Activated B cell treated with CpG ODN at 0.5 μM for 24 hours (primary cell): ENCODE measurements at regions of chr3 and their contacts with region 1.

Region 1: DNA sequence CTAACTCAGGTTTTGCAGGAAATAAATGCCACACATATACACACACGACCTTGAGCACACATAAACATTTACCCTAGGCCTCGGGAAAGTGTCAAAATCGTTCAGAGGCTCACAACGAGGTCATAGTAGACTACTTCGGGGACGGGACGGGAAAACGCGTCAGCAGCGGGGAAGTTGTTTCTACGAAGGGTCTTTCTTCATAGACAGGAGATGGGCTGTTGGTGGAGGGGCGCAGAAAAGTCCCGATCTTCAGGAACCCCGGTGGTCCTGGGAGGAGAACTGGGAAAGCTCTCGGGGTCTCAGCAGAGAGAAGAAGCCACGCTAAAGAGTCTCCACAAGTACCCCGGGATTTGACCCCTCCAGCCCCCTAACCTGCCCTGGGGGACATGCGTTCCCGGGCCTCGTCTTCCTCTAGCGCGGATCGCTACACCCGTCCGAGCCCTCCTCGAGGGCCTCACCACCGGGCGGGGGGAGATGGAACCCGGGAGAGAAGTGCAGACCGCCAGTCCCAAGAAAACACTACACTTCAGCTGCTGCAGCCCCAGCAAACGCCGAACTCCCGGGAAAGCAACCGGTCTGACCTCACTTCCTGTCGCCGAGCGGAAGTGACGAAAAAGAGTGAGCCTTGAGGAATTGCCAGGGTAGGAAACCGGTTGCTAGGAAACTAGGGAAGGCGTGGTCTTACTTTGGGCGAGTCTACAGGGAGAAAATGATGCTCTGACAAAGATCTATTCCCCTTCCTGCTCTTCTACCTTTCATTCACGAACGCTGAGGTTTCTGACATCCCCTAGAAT is at the start of gene PIK3R4:
- DNase-seq: peak; percentile 82
- ATAC-seq: peak; percentile 80
- H3K4me3 Mint-ChIP-seq: peak within 1 kb of the TSS; percentile 87
- H3K27ac Mint-ChIP-seq: peak within 1 kb of the TSS; percentile 91
- H3K4me1 Mint-ChIP-seq: peaks cover 53% of the 10 kb centered on the region
- H3K27me3 Mint-ChIP-seq: no peaks in the 10 kb centered on the region
- CTCF ChIP-seq: no peak
- total RNA-seq, gene PIK3R4: 22.1 and 32.4 TPM in 2 replicates

Region 2: DNA sequence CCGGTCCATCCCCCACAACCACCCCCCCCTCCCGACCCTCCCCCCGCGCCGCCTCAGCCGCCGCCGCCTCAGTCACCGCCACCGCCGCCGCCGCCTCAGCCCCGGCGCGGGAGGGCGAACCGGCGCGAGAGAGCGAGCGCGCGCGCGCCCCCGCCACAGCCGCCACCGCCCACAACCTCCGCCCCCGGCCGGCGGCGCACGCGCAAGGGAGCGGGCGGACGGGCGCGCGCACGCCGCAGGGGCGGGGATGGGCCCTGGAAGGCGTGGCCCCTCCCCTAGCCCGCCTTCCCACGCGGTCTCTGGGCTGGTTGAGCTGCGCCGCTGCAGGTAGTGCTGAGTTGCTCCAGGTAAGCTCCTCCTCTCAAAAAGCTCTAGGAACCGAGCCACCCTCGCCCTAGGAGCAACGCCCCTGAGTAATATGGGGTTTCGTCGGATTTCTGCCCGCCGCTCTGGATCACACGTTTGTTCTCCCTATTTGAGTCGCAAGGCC is 852.8 kb before region 1 on chr3 and contains the start of gene TMCC1:
- CTCF ChIA-PET with region 1: no interaction called
- POLR2A ChIA-PET with region 1: no interaction called
- intact Hi-C with region 1: loop called (anchors 5 kb)
- DNase-seq: peak; percentile 92
- ATAC-seq: peak; percentile 90
- H3K4me3 Mint-ChIP-seq: peak within 1 kb of the TSS; percentile 87
- H3K27ac Mint-ChIP-seq: peak within 1 kb of the TSS; percentile 88
- H3K4me1 Mint-ChIP-seq: peaks cover 34% of the 10 kb centered on the region
- H3K27me3 Mint-ChIP-seq: no peaks in the 10 kb centered on the region
- CTCF ChIP-seq: no peak
- total RNA-seq, gene TMCC1: 25.8 and 25.9 TPM in 2 replicates

Region 3: DNA sequence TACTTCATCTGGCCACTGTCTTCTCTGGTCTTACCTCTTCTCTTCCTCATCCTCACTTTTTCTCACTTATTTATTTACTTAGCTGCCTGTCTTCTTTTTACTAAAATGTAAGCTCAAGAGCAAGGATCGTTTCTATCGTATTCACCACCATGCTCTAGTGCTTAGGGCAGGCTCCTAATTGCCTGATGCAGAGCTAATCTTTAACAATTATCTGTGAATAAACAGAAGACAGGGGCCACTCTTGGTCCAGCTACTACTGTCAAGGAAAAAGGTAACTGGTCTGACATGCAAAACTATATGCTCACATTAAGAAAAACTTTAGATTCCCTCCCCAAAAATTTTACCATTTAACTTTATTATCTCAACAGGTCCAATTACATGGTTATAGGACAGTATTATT is 17.3 kb before region 1 on chr3:
- CTCF ChIA-PET with region 1: no interaction called
- POLR2A ChIA-PET with region 1: interaction called, 3 read pairs
- intact Hi-C with region 1: loop called (anchors 2 kb)
- DNase-seq: no peak
- ATAC-seq: no peak
- H3K4me3 Mint-ChIP-seq: no peak overlapping the region
- H3K27ac Mint-ChIP-seq: no peak overlapping the region
- H3K4me1 Mint-ChIP-seq: peaks cover 4% of the 10 kb centered on the region
- H3K27me3 Mint-ChIP-seq: no peaks in the 10 kb centered on the region
- CTCF ChIP-seq: no peak

Region 4: DNA sequence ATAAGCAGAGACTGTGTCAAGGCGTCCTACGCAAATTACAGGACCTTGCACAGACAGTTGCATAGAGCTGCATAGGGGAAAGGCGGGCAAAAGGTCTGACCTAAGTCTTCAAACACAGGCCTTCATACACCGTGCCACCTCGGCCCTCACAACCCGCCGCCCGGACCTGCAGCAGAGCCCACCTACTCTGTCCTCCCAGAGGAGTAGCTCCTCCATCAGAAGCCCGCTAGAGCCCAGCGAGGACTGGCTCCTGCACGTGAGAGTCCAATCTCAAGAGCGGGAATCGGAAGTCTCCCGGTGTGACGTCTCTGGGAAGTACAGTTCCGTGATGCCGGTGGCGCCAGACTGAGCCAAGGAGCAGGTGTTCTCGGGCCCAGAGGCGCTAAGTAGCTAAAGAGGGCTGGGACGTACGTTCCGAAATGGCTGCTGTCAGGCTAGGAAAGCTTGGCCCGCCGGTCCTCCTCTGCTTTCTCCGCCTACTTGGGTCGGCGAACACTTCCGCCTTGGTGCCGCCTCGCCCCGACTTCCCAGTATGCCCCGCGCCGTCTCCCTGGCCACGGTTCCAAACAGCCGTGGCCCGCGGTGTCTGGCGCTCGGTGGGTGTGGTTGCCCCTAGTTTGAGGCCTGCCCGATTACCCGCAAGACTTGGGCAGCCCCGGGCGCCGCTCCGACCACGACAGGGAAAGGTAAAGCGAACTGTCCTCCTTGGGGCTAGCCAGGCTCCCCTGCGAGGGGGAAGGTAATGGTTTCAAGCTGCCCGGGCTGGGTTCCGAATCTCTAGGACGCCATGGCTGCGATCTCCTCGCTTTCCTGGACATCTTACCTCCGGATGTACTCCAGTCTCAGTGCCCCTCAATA is 280.1 kb after region 1 on chr3 and contains the starts of genes ASTE1 and NEK11:
- CTCF ChIA-PET with region 1: no interaction called
- POLR2A ChIA-PET with region 1: interaction called, 5 read pairs
- intact Hi-C with region 1: loop called (anchors 1 kb)
- DNase-seq: peak; percentile 89
- ATAC-seq: peak; percentile 97
- H3K4me3 Mint-ChIP-seq: peak within 1 kb of the TSS; percentile 96
- H3K27ac Mint-ChIP-seq: peak within 1 kb of the TSS; percentile 97
- H3K4me1 Mint-ChIP-seq: peaks cover 52% of the 10 kb centered on the region
- H3K27me3 Mint-ChIP-seq: no peaks in the 10 kb centered on the region
- CTCF ChIP-seq: no peak
- total RNA-seq, gene ASTE1: 15.6 and 16.9 TPM in 2 replicates
- total RNA-seq, gene NEK11: 1.5 and 1.9 TPM in 2 replicates

Region 5: GRCh38 chr3:131381444-131382291 is 635.2 kb after region 1 on chr3 and contains the start of gene NUDT16:
- CTCF ChIA-PET with region 1: no interaction called
- POLR2A ChIA-PET with region 1: interaction called, 3 read pairs
- intact Hi-C with region 1: loop called (anchors 2 kb)
- DNase-seq: peak; percentile 98
- ATAC-seq: peak; percentile 98
- H3K4me3 Mint-ChIP-seq: peak within 1 kb of the TSS; percentile 97
- H3K27ac Mint-ChIP-seq: peak within 1 kb of the TSS; percentile 92
- H3K4me1 Mint-ChIP-seq: peaks cover 24% of the 10 kb centered on the region
- H3K27me3 Mint-ChIP-seq: no peaks in the 10 kb centered on the region
- CTCF ChIP-seq: no peak
- total RNA-seq, gene NUDT16: 15.8 TPM in 2 replicates

Region 6: DNA sequence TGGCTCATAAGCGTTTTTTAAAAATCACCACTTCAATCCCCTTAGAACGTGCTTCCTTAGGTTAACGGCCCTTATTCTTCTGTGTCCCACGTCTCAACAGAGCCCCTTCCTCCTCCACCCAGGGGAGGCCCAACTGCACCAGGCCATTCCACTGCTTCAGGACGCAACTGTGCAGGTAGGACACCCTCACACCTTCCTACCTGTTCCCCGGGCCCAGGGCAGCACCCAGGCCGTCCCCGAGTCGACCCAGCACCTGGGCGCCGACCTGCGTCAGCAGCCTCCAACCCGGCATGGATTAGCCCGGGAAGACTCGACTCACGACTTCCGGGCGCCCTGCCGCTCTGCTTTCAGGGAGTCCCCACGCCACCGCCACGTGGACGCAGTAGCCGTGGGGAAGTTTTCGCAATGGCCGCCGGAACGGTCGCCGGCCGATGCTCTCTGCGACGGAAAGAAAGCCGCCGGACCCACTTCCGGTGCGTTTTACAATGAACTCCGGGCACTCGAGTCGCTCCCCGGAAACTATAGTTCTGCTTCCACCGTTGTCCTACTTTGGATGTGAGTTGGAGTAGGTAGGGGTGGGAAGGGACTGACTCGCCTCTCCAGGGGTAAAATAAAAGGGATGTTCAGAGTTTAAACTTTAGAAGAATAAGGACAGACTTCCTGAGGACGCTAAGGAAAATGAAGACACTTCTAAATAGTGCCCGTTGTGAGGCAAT is 756.2 kb after region 1 on chr3 and contains the start of gene MRPL3:
- CTCF ChIA-PET with region 1: no interaction called
- POLR2A ChIA-PET with region 1: interaction called, 5 read pairs
- intact Hi-C with region 1: loop called (anchors 2 kb)
- DNase-seq: peak; percentile 73
- ATAC-seq: peak; percentile 92
- H3K4me3 Mint-ChIP-seq: peak within 1 kb of the TSS; percentile 98
- H3K27ac Mint-ChIP-seq: peak within 1 kb of the TSS; percentile 93
- H3K4me1 Mint-ChIP-seq: peaks cover 38% of the 10 kb centered on the region
- H3K27me3 Mint-ChIP-seq: peaks cover 3% of the 10 kb centered on the region
- CTCF ChIP-seq: no peak
- total RNA-seq, gene MRPL3: 79.9 and 81.7 TPM in 2 replicates

Region 7: DNA sequence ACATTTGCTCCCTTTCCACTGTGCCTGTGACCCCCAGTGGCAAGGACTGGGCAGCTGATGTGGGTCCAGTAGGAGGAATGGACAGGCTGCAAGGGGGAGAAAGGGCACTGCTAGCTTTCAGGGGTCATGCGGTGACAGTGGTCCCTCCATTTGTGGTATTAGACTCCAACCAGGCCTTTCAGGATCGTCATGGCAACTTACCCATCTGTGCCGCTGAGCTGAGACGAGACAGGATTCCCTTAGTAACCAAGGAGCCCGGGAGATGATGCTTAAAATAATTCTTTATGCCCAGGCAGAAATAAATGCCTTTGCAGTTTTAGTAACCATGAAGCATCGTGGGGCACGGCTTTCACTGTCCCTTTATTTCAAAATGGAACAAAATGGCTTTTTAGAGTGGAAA is 772.2 kb after region 1 on chr3:
- CTCF ChIA-PET with region 1: no interaction called
- POLR2A ChIA-PET with region 1: interaction called, 10 read pairs
- intact Hi-C with region 1: no loop called
- DNase-seq: no peak
- ATAC-seq: no peak
- H3K4me3 Mint-ChIP-seq: no peak overlapping the region
- H3K27ac Mint-ChIP-seq: no peak overlapping the region
- H3K4me1 Mint-ChIP-seq: no peaks in the 10 kb centered on the region
- H3K27me3 Mint-ChIP-seq: peaks cover 3% of the 10 kb centered on the region
- CTCF ChIP-seq: no peak